ENCODE measurements at regions of chr12 and their contacts with region 1.

Region 1: DNA sequence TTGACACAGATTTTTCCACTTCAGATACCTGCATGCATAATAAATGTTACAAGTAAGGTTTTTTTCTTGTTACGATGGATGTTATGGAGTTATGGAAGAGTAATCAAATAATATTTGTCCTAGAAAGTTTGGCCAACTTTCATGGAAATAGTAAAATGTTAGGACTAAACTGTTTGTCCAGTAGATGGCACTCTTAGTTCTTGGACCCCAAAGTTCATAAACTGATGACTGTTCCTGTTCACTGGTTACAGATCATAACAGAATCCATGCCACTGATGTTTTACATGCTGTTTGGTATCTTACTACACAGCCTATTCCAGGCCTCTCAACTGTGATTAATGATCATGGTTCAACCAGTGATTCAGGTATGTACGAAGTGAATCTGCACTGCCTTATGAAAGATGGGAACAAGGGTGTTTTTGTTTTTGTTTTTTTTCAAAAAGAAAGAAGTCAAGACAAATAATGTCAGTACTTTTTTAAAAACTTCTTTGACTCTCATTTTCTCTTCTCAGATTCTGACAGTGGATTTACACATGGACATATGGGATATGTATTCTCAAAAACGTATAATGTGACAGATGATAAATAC is 48.8 kb upstream of the SLCO1C1 start:
- DNase-seq: peak in 1 of 2 experiments; percentile 36
- H3K4me3 ChIP-seq: no peak overlapping the region
- H3K4me3 Mint-ChIP-seq: no peak overlapping the region
- H3K27ac Mint-ChIP-seq: no peak overlapping the region
- H3K4me1 ChIP-seq: no peaks in the 10 kb centered on the region
- H3K4me1 Mint-ChIP-seq: no peaks in the 10 kb centered on the region
- H3K27me3 ChIP-seq: no peaks in the 10 kb centered on the region
- H3K27me3 Mint-ChIP-seq: no peaks in the 10 kb centered on the region
- CTCF ChIP-seq: peak; percentile 63 to 65

Region 2: GRCh38 chr12:20950248-20950647 is 303.9 kb after region 1 on chr12:
- CTCF ChIA-PET with region 1: no interaction called
- POLR2A ChIA-PET with region 1: no interaction called
- intact Hi-C with region 1: loop called (anchors 1 kb)
- DNase-seq: peak in 1 of 2 experiments; percentile 57
- H3K4me3 ChIP-seq: no peak overlapping the region
- H3K4me3 Mint-ChIP-seq: no peak overlapping the region
- H3K27ac Mint-ChIP-seq: no peak overlapping the region
- H3K4me1 ChIP-seq: peaks cover 1% of the 10 kb centered on the region; the same call in 1 of the 2 replicates
- H3K4me1 Mint-ChIP-seq: peaks cover 4% of the 10 kb centered on the region
- H3K27me3 ChIP-seq: no peaks in the 10 kb centered on the region
- H3K27me3 Mint-ChIP-seq: peaks cover 4% of the 10 kb centered on the region
- CTCF ChIP-seq: peak; percentile 61 to 76

Region 3: DNA sequence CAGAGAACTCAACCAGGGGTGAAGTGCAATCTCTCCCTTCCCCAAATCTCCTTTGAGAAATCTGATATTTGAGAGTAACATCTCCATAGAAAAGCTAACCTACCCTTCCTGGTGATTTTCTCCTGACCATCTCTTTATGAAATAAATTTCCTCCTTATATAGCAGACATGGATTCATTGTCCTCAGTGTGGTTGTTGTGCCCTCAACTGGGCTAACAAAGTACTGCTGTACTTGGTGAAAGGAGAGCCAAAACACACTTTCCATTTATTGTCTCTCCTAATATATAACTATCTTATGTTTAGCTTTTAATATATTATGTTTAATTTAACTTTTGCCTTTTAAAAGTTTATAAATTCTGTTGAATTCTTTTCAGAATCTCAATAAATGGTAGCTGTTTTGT is 419.5 kb after region 1 on chr12:
- CTCF ChIA-PET with region 1: no interaction called
- POLR2A ChIA-PET with region 1: no interaction called
- intact Hi-C with region 1: loop called (anchors 1 kb)
- DNase-seq: peak in 1 of 2 experiments; percentile 33
- H3K4me3 ChIP-seq: no peak overlapping the region
- H3K4me3 Mint-ChIP-seq: no peak overlapping the region
- H3K27ac Mint-ChIP-seq: no peak overlapping the region
- H3K4me1 ChIP-seq: no peaks in the 10 kb centered on the region
- H3K4me1 Mint-ChIP-seq: no peaks in the 10 kb centered on the region
- H3K27me3 ChIP-seq: no peaks in the 10 kb centered on the region
- H3K27me3 Mint-ChIP-seq: peaks cover 10% of the 10 kb centered on the region
- CTCF ChIP-seq: peak; percentile 41 to 64

Region 4: DNA sequence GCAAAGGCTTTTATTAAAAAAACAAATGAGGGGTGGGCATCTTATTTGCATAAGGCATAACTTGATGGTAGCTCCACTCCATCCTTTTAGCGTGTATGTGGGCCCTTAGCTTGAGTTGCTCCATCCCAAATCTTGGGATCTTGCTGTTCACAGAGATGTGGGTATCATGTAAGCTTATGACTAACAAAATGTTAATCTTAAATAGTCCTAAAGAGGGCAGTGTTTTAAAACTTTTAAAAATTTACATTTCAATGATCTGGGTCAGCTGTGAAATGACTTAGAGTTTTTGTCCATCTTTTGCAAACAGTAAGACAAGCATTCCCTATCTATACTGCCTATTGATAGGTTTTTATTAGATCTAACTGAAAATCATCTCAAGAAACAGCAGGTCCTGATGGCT is 602.3 kb after region 1 on chr12:
- CTCF ChIA-PET with region 1: no interaction called
- POLR2A ChIA-PET with region 1: no interaction called
- intact Hi-C with region 1: loop called (anchors 5 kb)
- DNase-seq: no peak
- H3K4me3 ChIP-seq: no peak overlapping the region
- H3K4me3 Mint-ChIP-seq: no peak overlapping the region
- H3K27ac Mint-ChIP-seq: no peak overlapping the region
- H3K4me1 ChIP-seq: no peaks in the 10 kb centered on the region
- H3K4me1 Mint-ChIP-seq: no peaks in the 10 kb centered on the region
- H3K27me3 ChIP-seq: no peaks in the 10 kb centered on the region
- H3K27me3 Mint-ChIP-seq: peaks cover 7% of the 10 kb centered on the region
- CTCF ChIP-seq: peak in 1 of 2 experiments; percentile 39

Measured in Caco-2 (cell line).